HEK293 (cell line): ENCODE measurements at regions of chr6 and their contacts with region 1.

Region 1: DNA sequence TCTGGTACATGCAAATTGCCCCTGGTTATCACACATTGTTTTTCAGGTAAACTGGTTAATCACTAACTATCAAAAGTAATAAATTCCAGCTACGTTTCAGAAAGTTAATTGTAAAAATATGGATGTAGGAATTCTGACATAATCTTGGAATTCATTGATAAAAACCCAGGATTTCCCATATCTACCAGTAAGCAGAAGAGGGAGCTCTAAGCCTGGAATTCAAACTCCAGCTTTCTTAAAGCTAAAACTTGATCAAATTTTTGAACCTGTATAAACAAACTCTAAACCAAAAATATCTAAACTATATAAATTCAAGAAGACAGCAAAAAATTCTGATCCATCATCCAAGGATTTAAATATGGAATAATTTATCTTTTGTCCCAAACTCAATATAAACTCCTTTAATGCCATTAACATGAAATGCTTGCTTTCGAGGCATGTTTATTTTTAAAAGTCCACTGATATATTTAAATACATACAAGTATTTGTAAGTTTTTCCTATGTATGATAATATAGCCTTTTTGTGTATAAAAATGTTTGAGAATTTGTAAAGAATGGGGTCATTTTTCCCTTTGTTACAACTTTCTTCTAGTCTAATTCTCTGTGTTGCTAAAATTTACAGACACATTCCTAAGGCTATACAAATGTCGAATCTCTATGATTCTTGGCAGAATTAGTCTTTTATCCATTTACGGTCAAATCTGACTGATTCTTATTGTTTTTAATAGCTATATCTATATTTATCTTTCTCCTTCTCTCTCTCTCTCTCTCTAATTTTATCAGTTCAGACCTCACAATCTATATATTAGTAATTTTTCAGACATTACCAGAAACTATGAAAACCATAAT is 91.4 kb upstream of the RNF217 start:
- H3K4me3 ChIP-seq: no peak overlapping the region
- H3K27ac ChIP-seq: no peak overlapping the region
- H3K4me1 ChIP-seq: no peaks in the 10 kb centered on the region
- CTCF ChIP-seq: no peak

Region 2: GRCh38 chr6:124769811-124770544 is 100.9 kb before region 1 on chr6:
- CTCF ChIA-PET with region 1: no interaction called
- POLR2A ChIA-PET with region 1: no interaction called
- H3K4me3 ChIP-seq: no peak overlapping the region
- H3K27ac ChIP-seq: no peak overlapping the region
- H3K4me1 ChIP-seq: peaks cover 45% of the 10 kb centered on the region
- CTCF ChIP-seq: no peak

Region 3: DNA sequence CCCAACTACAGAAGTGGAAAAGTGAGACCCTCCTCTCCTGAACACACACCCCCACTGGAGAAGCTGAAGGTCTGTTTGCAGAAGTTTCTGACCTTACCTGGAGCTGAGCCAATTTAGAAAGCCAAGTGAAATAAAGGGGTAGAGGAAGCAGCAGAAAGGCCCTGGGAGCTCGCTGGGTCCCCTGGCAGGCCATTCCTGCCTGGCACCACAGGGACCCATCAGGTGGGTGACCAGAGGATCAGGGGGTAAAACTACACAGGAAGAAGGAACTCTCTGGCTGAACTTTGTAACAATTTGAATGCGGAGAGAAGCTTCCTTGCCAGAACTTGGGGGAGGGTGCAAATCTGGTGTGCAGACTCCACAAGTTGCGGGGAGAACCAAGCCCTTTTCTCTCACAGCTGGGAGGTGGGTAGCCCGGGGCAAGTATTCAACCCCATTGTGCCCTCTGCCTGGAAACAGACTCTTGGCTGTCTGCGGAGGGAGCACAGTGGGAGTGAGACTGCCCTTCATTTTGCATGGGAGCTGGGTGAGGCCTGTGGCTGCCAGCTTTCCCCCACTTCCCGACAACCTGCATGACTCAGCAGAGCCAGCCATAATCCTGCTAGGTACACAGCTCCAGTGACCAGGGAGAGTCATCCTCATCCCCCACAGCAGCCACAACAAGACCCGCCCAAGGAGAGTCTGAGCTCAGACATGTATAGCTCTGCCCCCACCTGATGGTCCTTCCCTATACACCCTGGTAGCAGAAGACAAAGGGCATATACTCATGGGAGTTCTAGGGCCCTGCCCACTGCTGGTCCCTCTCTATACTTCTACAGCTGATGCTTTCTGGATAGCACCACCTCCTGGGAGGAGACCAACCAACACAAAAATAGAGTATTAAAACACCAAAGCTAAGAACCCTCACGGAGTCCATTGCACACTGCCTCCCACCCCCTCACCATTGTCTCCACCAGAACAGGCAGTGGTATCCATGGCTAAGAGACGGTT is 253.2 kb after region 1 on chr6:
- CTCF ChIA-PET with region 1: interaction called, 11 read pairs
- POLR2A ChIA-PET with region 1: no interaction called
- H3K4me3 ChIP-seq: no peak overlapping the region
- H3K27ac ChIP-seq: peak overlapping the region; percentile 8; the same call in 1 of the 2 replicates
- H3K4me1 ChIP-seq: peaks cover 7% of the 10 kb centered on the region
- CTCF ChIP-seq: no peak

Region 4: GRCh38 chr6:125220712-125221111 is 349.9 kb after region 1 on chr6:
- CTCF ChIA-PET with region 1: no interaction called
- POLR2A ChIA-PET with region 1: no interaction called
- H3K4me3 ChIP-seq: no peak overlapping the region
- H3K27ac ChIP-seq: no peak overlapping the region
- H3K4me1 ChIP-seq: no peaks in the 10 kb centered on the region
- CTCF ChIP-seq: no peak